ENCODE measurements at regions of chr13 and their contacts with region 1.

Region 1: DNA sequence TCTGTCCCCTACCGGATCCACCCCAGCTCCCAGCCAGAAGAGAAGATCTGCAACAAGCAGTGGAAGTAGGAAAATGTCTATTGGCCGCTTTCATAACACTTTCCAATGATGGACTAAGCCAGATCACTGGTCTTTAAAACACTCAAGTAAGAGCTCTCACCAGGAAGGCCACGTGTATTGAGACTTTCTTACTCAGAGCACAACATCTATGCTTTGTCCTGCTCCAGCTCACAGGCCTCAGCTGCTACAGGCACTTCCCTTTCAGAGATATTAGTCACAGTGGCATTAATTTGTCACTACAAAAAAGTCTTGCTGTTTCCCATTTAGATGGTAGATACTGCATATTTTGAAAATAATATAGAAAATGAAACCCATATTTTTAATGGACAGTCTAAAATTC is 164.2 kb downstream of the ABCC4 start:
- DNase-seq: no peak
- H3K4me3 Mint-ChIP-seq: no peak overlapping the region
- H3K27ac Mint-ChIP-seq: no peak overlapping the region
- H3K4me1 Mint-ChIP-seq: no peaks in the 10 kb centered on the region
- H3K27me3 Mint-ChIP-seq: no peaks in the 10 kb centered on the region

Region 2: DNA sequence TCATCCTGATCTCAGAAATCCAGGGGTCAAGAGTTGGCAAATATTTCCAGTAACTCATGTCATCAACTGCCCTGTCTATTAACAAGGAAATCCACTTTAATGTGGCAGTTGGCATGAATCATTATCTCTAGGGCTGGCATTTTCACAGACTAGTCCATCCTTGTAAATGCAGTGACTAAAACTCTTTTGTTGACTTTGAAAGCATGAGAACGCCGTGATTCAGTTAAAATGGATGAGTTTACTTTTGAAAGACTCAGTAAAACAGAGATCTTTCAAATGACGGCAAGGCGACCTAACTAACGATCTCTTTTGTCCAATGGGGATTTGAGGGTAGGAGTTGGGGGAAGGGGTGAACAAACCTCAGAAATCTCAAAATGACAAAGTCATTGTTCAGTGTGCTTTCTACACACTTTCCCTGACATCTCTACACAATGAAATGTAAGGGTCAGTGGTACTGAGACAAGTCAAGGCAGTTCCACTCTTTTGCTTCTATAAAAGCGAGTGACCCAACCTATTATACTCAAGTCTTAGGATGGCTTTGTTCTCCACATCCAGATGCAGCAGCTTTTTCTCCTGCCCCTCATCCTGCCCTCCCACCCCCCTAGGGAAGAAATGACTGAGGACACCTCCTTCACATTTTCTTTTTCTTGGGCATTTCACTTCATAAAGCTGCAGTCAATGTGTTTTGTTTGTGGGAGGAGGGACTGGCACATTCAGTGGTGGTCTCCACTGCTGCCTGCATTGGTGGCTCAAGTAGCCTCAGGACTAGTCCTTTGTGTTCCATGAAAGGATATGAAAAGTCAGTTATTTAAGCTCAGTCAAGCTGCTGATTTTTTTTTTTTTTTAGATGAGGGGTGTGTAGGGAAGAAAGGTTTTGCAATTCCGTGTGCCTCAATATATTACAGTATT is 36.3 kb before region 1 on chr13:
- CTCF ChIA-PET with region 1: no interaction called
- POLR2A ChIA-PET with region 1: no interaction called
- intact Hi-C with region 1: loop called (anchors 2 kb)
- DNase-seq: no peak
- H3K4me3 Mint-ChIP-seq: no peak overlapping the region
- H3K27ac Mint-ChIP-seq: peak overlapping the region; percentile 18
- H3K4me1 Mint-ChIP-seq: peaks cover 9% of the 10 kb centered on the region
- H3K27me3 Mint-ChIP-seq: no peaks in the 10 kb centered on the region

Region 3: GRCh38 chr13:95115525-95115924 is 21.6 kb before region 1 on chr13:
- CTCF ChIA-PET with region 1: no interaction called
- POLR2A ChIA-PET with region 1: no interaction called
- intact Hi-C with region 1: no loop called
- DNase-seq: no peak
- H3K4me3 Mint-ChIP-seq: no peak overlapping the region
- H3K27ac Mint-ChIP-seq: no peak overlapping the region
- H3K4me1 Mint-ChIP-seq: no peaks in the 10 kb centered on the region
- H3K27me3 Mint-ChIP-seq: no peaks in the 10 kb centered on the region